ENCODE measurements at regions of chr2 and their contacts with region 1.

Region 1: DNA sequence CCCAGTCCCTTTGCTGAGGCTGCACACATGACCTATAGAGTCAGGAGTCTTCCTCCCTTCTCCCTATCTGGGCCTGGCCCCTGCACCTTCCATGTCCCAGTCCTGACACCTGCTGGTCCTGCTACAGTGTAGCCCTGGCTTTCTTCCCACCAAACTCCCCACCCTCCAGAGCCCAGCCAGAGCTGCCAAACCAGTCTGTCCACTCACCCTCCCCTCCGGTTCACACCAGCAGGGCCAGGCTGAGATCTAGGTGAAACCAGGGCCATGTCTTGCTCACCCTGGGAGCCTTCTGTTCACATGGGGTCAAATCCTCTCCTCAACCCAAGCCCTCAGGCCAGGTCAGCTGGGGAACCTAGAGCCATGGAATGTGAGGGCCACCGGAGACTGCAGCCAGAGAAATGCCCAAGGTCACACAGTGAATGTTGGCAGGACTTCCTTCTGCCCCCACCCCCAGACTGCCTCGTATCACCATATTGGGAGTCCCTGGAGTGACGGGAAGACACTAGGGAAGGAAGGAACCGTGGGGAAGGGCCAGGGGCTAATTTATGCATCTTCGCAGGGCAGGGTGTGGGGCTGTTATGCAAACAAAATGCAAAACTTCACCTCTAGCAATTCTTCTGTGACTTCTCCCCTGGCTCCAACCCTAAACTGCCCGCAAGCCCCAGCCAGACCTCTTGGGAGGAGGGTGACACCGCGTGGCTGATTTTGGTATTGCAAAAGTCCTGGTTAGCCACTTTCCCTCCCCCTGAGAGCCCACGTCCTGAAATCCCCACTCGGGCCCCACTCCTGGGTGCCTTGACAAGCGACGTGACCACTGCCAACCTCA is 14.6 kb downstream of the TNS1 start:
- DNase-seq: peak; percentile 62 to 71 (median 69)
- ATAC-seq: peak; percentile 94
- H3K4me3 ChIP-seq: no peak overlapping the region
- H3K27ac ChIP-seq: no peak overlapping the region
- H3K4me1 ChIP-seq: no peaks in the 10 kb centered on the region
- H3K27me3 ChIP-seq: peaks cover 0 to 26% of the 10 kb centered on the region in 2 experiments; a peak in 2 of 5 replicates
- CTCF ChIP-seq: peak; percentile 78 to 81 (median 79)
- EP300 ChIP-seq: no peak
- POLR2A ChIP-seq: no peak
- RAD21 ChIP-seq: peak; percentile 74 to 79

Region 2: DNA sequence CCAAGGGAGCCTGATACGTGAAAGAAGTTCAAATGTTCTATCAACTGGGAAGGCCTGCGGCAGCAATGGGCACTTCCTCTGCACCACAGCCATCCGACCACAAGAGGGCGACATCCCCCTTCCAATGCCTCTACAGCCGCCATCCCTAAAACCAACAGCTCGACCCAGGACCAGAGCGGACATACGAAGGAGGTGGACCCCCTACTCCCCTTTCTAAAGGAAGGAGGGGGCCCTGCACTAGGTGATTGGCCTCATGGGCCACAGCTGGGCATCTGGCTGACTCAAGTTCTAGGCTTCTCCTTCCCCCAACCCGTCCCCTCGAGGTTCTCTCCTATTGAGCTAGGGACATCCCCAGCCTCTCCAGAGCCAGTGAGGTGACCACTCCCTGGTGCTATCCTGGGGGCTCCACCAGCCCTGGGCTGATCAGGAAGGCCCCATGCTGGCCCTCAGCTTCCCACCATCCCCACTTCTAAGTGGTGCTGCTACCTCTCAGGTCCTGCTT is 202.6 kb before region 1 on chr2:
- CTCF ChIA-PET with region 1: interaction called, 13 read pairs
- POLR2A ChIA-PET with region 1: interaction called, 6 read pairs
- in situ Hi-C with region 1: loop called (anchors 5 kb)
- intact Hi-C with region 1: loop called (anchors 1 kb)
- DNase-seq: peak; percentile 63 to 73 (median 70)
- ATAC-seq: peak; percentile 88
- H3K4me3 ChIP-seq: no peak overlapping the region
- H3K27ac ChIP-seq: no peak overlapping the region
- H3K4me1 ChIP-seq: peaks cover 0 to 5% of the 10 kb centered on the region in 2 experiments; a peak in 3 of 5 replicates
- H3K27me3 ChIP-seq: no peaks in the 10 kb centered on the region
- CTCF ChIP-seq: peak; percentile 82 to 91 (median 90)
- EP300 ChIP-seq: no peak
- POLR2A ChIP-seq: no peak
- RAD21 ChIP-seq: peak; percentile 66 to 81

Region 3: GRCh38 chr2:217886720-217887309 is 101.4 kb before region 1 on chr2:
- CTCF ChIA-PET with region 1: interaction called, 3 read pairs
- POLR2A ChIA-PET with region 1: interaction called, 4 read pairs
- in situ Hi-C with region 1: no loop called
- intact Hi-C with region 1: loop called (anchors 5 kb)
- DNase-seq: peak; percentile 59 to 72 (median 68)
- ATAC-seq: peak; percentile 90
- H3K4me3 ChIP-seq: no peak overlapping the region
- H3K27ac ChIP-seq: no peak overlapping the region
- H3K4me1 ChIP-seq: peaks cover 3 to 6% of the 10 kb centered on the region in 2 experiments; a peak in 3 of 5 replicates
- H3K27me3 ChIP-seq: no peaks in the 10 kb centered on the region; a peak in 2 of 5 replicates
- CTCF ChIP-seq: peak; percentile 72 to 75 (median 72)
- EP300 ChIP-seq: no peak
- POLR2A ChIP-seq: no peak
- RAD21 ChIP-seq: peak; percentile 43 to 68; a peak in 3 of 4 replicates

Region 4: GRCh38 chr2:217918308-217919024 is 69.8 kb before region 1 on chr2:
- CTCF ChIA-PET with region 1: no interaction called
- POLR2A ChIA-PET with region 1: no interaction called
- in situ Hi-C with region 1: no loop called
- intact Hi-C with region 1: loop called (anchors 10 kb)
- DNase-seq: peak in 3 of 4 experiments; percentile 26 to 39 (median 33)
- ATAC-seq: peak; percentile 80
- H3K4me3 ChIP-seq: no peak overlapping the region
- H3K27ac ChIP-seq: no peak overlapping the region
- H3K4me1 ChIP-seq: no peaks in the 10 kb centered on the region; a peak in 1 of 5 replicates
- H3K27me3 ChIP-seq: peaks cover 7 to 68% of the 10 kb centered on the region in 2 experiments; a peak in 3 of 5 replicates
- CTCF ChIP-seq: peak; percentile 27 to 29 (median 28); a peak in 4 of 6 replicates
- EP300 ChIP-seq: no peak
- POLR2A ChIP-seq: no peak
- RAD21 ChIP-seq: no peak

Region 5: GRCh38 chr2:217964275-217965161 is 23.7 kb before region 1 on chr2:
- CTCF ChIA-PET with region 1: no interaction called
- POLR2A ChIA-PET with region 1: no interaction called
- in situ Hi-C with region 1: no loop called
- intact Hi-C with region 1: no loop called
- DNase-seq: no peak
- ATAC-seq: no peak
- H3K4me3 ChIP-seq: no peak overlapping the region
- H3K27ac ChIP-seq: no peak overlapping the region
- H3K4me1 ChIP-seq: no peaks in the 10 kb centered on the region; a peak in 1 of 5 replicates
- H3K27me3 ChIP-seq: peaks cover 0 to 25% of the 10 kb centered on the region in 2 experiments; a peak in 2 of 5 replicates
- CTCF ChIP-seq: no peak
- EP300 ChIP-seq: no peak
- POLR2A ChIP-seq: no peak
- RAD21 ChIP-seq: no peak

Measured in K562 (cell line).